GM12878 (cell line): ENCODE measurements at regions of chr11 and their contacts with region 1.

Region 1: GRCh38 chr11:57741132-57742086 is at the start of gene SELENOH:
- DNase-seq: peak; percentile 95
- ATAC-seq: peak; percentile 95
- H3K4me3 ChIP-seq: peak within 1 kb of the TSS; percentile 95
- H3K27ac ChIP-seq: peak within 1 kb of the TSS; percentile 96
- H3K4me1 ChIP-seq: no peaks in the 10 kb centered on the region
- H3K27me3 ChIP-seq: no peaks in the 10 kb centered on the region
- CTCF ChIP-seq: no peak
- EP300 ChIP-seq: peak in 1 of 2 experiments; percentile 51; a peak in 1 of 4 replicates
- POLR2A ChIP-seq: peak; percentile 99
- RAD21 ChIP-seq: no peak
- polyA plus RNA-seq, gene SELENOH: 20.3 to 101 TPM

Region 2: GRCh38 chr11:57712256-57713150 is 28.9 kb before region 1 on chr11 and contains the start of gene TMX2:
- CTCF ChIA-PET with region 1: interaction called, 4 read pairs
- POLR2A ChIA-PET with region 1: interaction called, 8 read pairs
- RAD21 ChIA-PET with region 1: interaction called, 6 read pairs
- SMC1A ChIA-PET with region 1: interaction called, 14 read pairs
- in situ Hi-C with region 1: no loop called
- intact Hi-C with region 1: loop called (anchors 1 kb)
- DNase-seq: peak; percentile 99
- ATAC-seq: peak; percentile 95
- H3K4me3 ChIP-seq: peak within 1 kb of the TSS; percentile 97
- H3K27ac ChIP-seq: peak within 1 kb of the TSS; percentile 86
- H3K4me1 ChIP-seq: peaks cover 4% of the 10 kb centered on the region
- H3K27me3 ChIP-seq: no peaks in the 10 kb centered on the region
- CTCF ChIP-seq: no peak
- EP300 ChIP-seq: no peak
- POLR2A ChIP-seq: peak; percentile 96
- RAD21 ChIP-seq: no peak
- polyA plus RNA-seq, gene TMX2: 107 to 128 TPM

Region 3: DNA sequence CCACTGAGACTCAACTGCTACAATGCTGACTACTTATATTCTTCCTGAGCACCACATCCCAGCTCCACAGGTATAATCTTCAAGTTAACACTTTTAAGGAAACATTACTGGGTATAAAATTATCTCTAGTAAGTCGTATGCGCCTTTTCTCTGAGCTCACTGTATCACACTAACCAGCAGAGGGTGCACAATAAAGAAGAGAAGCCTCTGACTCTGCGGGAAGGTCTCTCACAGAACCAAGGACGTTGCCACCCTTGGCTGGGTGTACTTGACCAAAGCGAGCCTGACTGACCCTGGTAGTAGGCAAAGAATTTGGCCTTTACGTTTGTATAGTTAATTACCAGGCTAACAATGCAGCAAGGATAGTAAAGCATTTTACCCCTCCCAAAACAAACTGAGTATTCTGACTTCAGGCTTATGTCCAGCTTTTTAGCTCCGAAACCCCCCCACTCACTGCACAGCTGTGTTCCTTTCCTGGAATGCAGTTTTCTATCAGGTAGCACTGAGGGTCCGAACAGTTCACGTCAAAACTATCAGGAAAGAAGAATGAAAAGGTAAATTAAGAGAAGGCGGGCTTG is 10.4 kb after region 1 on chr11 and contains the start of gene BTBD18:
- CTCF ChIA-PET with region 1: interaction called, 15 read pairs
- POLR2A ChIA-PET with region 1: interaction called, 5 read pairs
- RAD21 ChIA-PET with region 1: no interaction called
- SMC1A ChIA-PET with region 1: interaction called, 14 read pairs
- in situ Hi-C with region 1: no loop called
- intact Hi-C with region 1: no loop called
- DNase-seq: no peak
- ATAC-seq: peak; percentile 93
- H3K4me3 ChIP-seq: no peak within 1 kb of the TSS
- H3K27ac ChIP-seq: no peak within 1 kb of the TSS
- H3K4me1 ChIP-seq: no peaks in the 10 kb centered on the region
- H3K27me3 ChIP-seq: no peaks in the 10 kb centered on the region
- CTCF ChIP-seq: peak; percentile 38 to 50 (median 50); a peak in 5 of 6 replicates
- EP300 ChIP-seq: no peak
- POLR2A ChIP-seq: no peak
- RAD21 ChIP-seq: peak; percentile 63
- polyA plus RNA-seq, gene BTBD18: 0.05 to 0.11 TPM

Region 4: GRCh38 chr11:57761301-57762234 is 20.2 kb after region 1 on chr11 and contains the start of gene CTNND1:
- CTCF ChIA-PET with region 1: interaction called, 7 read pairs
- POLR2A ChIA-PET with region 1: interaction called, 63 read pairs
- RAD21 ChIA-PET with region 1: interaction called, 4 read pairs
- SMC1A ChIA-PET with region 1: interaction called, 33 read pairs
- in situ Hi-C with region 1: no loop called
- intact Hi-C with region 1: loop called (anchors 2 kb)
- DNase-seq: peak; percentile 77
- ATAC-seq: peak; percentile 89
- H3K4me3 ChIP-seq: peak within 1 kb of the TSS; percentile 70
- H3K27ac ChIP-seq: peak within 1 kb of the TSS; percentile 92
- H3K4me1 ChIP-seq: no peaks in the 10 kb centered on the region
- H3K27me3 ChIP-seq: no peaks in the 10 kb centered on the region
- CTCF ChIP-seq: no peak
- EP300 ChIP-seq: no peak
- POLR2A ChIP-seq: peak; percentile 67; the same call in 1 of the 2 replicates
- RAD21 ChIP-seq: no peak
- polyA plus RNA-seq, gene CTNND1: 4.7 to 6.5 TPM

Region 5: DNA sequence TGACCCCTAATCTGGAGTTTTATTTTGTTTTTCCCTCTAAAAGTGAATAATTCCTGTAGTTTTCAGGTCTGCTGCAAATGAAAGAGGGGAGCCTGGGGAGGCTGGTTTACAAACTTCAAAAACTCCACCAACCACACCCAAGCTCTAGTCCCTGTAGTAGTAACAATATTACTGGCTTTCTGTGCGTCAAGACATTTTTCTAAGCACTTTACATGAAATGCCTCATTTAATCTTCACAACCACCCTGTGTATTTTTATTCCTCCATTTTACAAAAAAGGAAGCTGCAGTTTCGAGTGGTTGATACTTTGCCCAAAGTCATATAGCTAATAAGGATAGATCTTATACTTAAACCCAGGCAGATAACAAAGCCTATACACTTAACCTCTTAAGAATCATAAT is 43.7 kb after region 1 on chr11:
- CTCF ChIA-PET with region 1: interaction called, 3 read pairs
- POLR2A ChIA-PET with region 1: interaction called, 6 read pairs
- RAD21 ChIA-PET with region 1: interaction called, 7 read pairs
- SMC1A ChIA-PET with region 1: interaction called, 11 read pairs
- in situ Hi-C with region 1: no loop called
- intact Hi-C with region 1: no loop called
- DNase-seq: no peak
- ATAC-seq: peak; percentile 79
- H3K4me3 ChIP-seq: no peak overlapping the region
- H3K27ac ChIP-seq: peak overlapping the region; percentile 73
- H3K4me1 ChIP-seq: peaks cover 34% of the 10 kb centered on the region
- H3K27me3 ChIP-seq: no peaks in the 10 kb centered on the region
- CTCF ChIP-seq: no peak
- EP300 ChIP-seq: peak in 1 of 2 experiments; percentile 29; a peak in 1 of 4 replicates
- POLR2A ChIP-seq: no peak
- RAD21 ChIP-seq: no peak

Region 6: GRCh38 chr11:57792060-57792541 is 50.7 kb after region 1 on chr11:
- CTCF ChIA-PET with region 1: no interaction called
- POLR2A ChIA-PET with region 1: interaction called, 12 read pairs
- RAD21 ChIA-PET with region 1: no interaction called
- SMC1A ChIA-PET with region 1: interaction called, 4 read pairs
- in situ Hi-C with region 1: no loop called
- intact Hi-C with region 1: no loop called
- DNase-seq: peak; percentile 93
- ATAC-seq: peak; percentile 92
- H3K4me3 ChIP-seq: peak overlapping the region; percentile 34; the same call in 1 of the 2 replicates
- H3K27ac ChIP-seq: peak overlapping the region; percentile 52
- H3K4me1 ChIP-seq: peaks cover 42% of the 10 kb centered on the region
- H3K27me3 ChIP-seq: no peaks in the 10 kb centered on the region
- CTCF ChIP-seq: no peak
- EP300 ChIP-seq: peak; percentile 49 to 81; a peak in 3 of 4 replicates
- POLR2A ChIP-seq: peak; percentile 62; the same call in 1 of the 2 replicates
- RAD21 ChIP-seq: no peak

Region 7: GRCh38 chr11:58024601-58025091 is 283.2 kb after region 1 on chr11:
- CTCF ChIA-PET with region 1: no interaction called
- POLR2A ChIA-PET with region 1: no interaction called
- RAD21 ChIA-PET with region 1: no interaction called
- SMC1A ChIA-PET with region 1: no interaction called
- in situ Hi-C with region 1: no loop called
- intact Hi-C with region 1: no loop called
- DNase-seq: no peak
- ATAC-seq: no peak
- H3K4me3 ChIP-seq: no peak overlapping the region
- H3K27ac ChIP-seq: no peak overlapping the region
- H3K4me1 ChIP-seq: no peaks in the 10 kb centered on the region
- H3K27me3 ChIP-seq: no peaks in the 10 kb centered on the region
- CTCF ChIP-seq: no peak
- EP300 ChIP-seq: no peak
- POLR2A ChIP-seq: no peak
- RAD21 ChIP-seq: no peak

Region 8: GRCh38 chr11:58829786-58830185 is 1088.4 kb after region 1 on chr11:
- CTCF ChIA-PET with region 1: no interaction called
- POLR2A ChIA-PET with region 1: no interaction called
- RAD21 ChIA-PET with region 1: no interaction called
- SMC1A ChIA-PET with region 1: no interaction called
- in situ Hi-C with region 1: no loop called
- intact Hi-C with region 1: no loop called
- DNase-seq: no peak
- ATAC-seq: no peak
- H3K4me3 ChIP-seq: no peak overlapping the region
- H3K27ac ChIP-seq: no peak overlapping the region
- H3K4me1 ChIP-seq: no peaks in the 10 kb centered on the region
- H3K27me3 ChIP-seq: no peaks in the 10 kb centered on the region
- CTCF ChIP-seq: no peak
- EP300 ChIP-seq: no peak
- POLR2A ChIP-seq: no peak
- RAD21 ChIP-seq: no peak